HepG2 (cell line): ENCODE measurements at regions of chr15 and their contacts with region 1.

Region 1: DNA sequence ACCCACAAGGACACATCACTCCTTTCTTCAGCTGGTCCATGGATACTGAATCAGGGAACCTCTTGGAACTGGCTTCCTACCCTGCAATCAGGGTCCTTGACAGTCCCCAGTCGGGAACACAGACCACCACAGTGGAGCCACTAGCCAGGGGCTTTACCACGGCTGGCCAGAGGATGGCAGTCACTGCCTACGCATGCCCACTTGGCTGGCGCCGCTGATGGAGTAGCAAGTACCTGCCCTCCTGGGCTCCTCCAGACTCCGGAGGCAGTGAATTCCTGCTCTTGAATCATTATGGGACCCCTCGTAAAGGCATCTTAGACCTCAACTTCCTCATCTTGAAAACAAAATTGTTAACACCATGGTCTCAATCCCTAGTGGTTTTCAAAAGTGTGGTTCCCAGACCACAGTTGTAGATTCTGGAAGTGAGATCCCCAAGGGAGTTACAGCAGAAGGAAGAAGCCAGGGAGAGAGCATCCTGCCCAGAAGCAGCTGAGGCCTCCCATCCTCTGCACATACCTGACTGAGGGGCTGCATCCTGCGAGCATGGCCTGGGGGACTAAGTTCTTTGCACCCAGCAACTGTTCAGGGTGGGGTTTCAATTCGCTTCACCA is 9.1 kb upstream of the SKIC8 start:
- DNase-seq: peak; percentile 41
- ATAC-seq: peak; percentile 79
- H3K4me3 ChIP-seq: no peak overlapping the region
- H3K27ac ChIP-seq: no peak overlapping the region
- H3K4me1 ChIP-seq: peaks cover 31% of the 10 kb centered on the region
- H3K27me3 ChIP-seq: peaks cover 0 to 7% of the 10 kb centered on the region in 2 experiments; a peak in 3 of 5 replicates
- CTCF ChIP-seq: peak; percentile 94
- EP300 ChIP-seq: no peak
- POLR2A ChIP-seq: no peak
- RAD21 ChIP-seq: peak; percentile 88

Region 2: GRCh38 chr15:78353093-78353492 is 44.6 kb after region 1 on chr15:
- CTCF ChIA-PET with region 1: no interaction called
- POLR2A ChIA-PET with region 1: no interaction called
- in situ Hi-C with region 1: no loop called
- intact Hi-C with region 1: no loop called
- DNase-seq: peak; percentile 22
- ATAC-seq: no peak
- H3K4me3 ChIP-seq: no peak overlapping the region
- H3K27ac ChIP-seq: no peak overlapping the region
- H3K4me1 ChIP-seq: peaks cover under 1% of the 10 kb centered on the region; the same call in 1 of the 2 replicates
- H3K27me3 ChIP-seq: peaks cover 0 to 11% of the 10 kb centered on the region in 2 experiments; a peak in 2 of 5 replicates
- CTCF ChIP-seq: no peak
- EP300 ChIP-seq: no peak
- POLR2A ChIP-seq: no peak
- RAD21 ChIP-seq: no peak

Region 3: GRCh38 chr15:78364233-78364632 is 55.7 kb after region 1 on chr15:
- CTCF ChIA-PET with region 1: no interaction called
- POLR2A ChIA-PET with region 1: no interaction called
- in situ Hi-C with region 1: no loop called
- intact Hi-C with region 1: no loop called
- DNase-seq: no peak
- ATAC-seq: no peak
- H3K4me3 ChIP-seq: no peak overlapping the region
- H3K27ac ChIP-seq: no peak overlapping the region
- H3K4me1 ChIP-seq: no peaks in the 10 kb centered on the region
- H3K27me3 ChIP-seq: peaks cover 2 to 10% of the 10 kb centered on the region in 2 experiments; a peak in 4 of 5 replicates
- CTCF ChIP-seq: no peak
- EP300 ChIP-seq: no peak
- POLR2A ChIP-seq: no peak
- RAD21 ChIP-seq: no peak

Region 4: DNA sequence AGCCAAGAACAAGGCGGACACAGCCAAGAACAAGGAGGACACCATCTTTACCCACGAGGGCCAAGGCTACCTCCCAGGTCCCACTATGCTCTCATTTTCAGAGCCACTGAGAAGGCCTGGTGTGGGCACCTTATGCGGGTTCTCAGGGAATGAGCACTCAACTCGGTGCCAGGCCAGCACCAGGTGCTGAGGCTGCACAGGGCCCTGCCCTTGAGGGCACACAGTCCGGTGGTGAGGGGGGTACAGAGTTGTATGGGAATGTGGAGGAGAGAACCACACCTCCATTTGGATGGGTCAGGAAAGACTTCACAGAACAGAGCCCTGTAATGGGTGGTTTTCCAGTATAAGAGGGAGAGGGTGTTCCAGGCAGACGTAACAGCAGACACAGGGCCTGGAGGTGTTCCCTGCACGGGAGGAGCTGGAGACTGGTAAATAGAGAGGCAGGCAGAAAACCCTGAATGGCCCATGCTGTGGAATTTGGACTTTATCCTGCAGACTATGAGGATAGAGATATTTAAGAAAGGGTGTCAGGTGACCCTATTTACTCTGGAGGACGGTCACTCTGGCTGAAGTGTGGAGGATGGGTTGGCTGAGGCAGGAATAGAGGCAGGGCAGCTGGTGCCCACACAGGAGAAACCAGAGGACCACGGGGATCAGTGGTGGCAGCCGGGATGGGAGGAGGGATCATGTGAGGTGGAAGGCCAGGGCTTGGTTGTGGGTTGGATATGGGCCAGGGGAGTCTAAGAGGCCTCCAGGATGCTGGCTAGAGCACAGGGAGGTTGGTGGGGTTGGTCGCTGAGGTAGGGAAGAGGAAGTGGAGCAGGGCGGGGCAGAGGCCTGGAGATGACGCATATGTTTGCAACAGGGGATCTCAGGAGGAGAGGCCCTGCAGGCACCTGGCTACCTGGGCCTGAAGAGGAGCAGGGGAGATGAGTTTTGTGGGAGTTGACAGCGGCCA is 66.2 kb after region 1 on chr15:
- CTCF ChIA-PET with region 1: no interaction called
- POLR2A ChIA-PET with region 1: no interaction called
- in situ Hi-C with region 1: no loop called
- intact Hi-C with region 1: loop called (anchors 10 kb)
- DNase-seq: peak; percentile 90
- ATAC-seq: peak; percentile 93
- H3K4me3 ChIP-seq: peak overlapping the region; percentile 17 to 54 (median 40); a peak in 3 of 6 replicates
- H3K27ac ChIP-seq: peak overlapping the region; percentile 54
- H3K4me1 ChIP-seq: peaks cover 28% of the 10 kb centered on the region
- H3K27me3 ChIP-seq: no peaks in the 10 kb centered on the region; a peak in 1 of 5 replicates
- CTCF ChIP-seq: no peak
- EP300 ChIP-seq: peak; percentile 37 to 45; a peak in 2 of 4 replicates
- POLR2A ChIP-seq: no peak; a peak in 1 of 4 replicates
- RAD21 ChIP-seq: no peak

Region 5: DNA sequence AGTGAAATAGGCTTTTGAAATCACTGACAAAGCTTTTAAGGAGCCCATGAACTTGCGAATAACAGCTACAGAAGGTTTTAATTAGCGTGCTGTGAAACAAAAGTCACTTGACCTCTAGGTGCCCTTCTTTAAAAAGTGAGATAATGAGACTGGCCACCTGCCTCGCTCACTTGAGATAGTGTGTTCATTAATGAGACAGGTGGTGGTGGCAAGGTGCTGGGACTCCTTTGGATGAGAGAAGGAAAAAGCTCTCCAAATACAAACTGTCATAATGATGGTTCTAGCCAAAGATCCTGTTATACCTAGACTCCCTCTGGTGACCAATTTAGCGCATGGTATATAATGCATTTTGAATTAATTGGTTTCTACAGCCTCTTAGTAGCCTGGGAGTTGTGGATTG is 106.8 kb after region 1 on chr15:
- CTCF ChIA-PET with region 1: interaction called, 12 read pairs
- POLR2A ChIA-PET with region 1: interaction called, 6 read pairs
- in situ Hi-C with region 1: loop called (anchors 5 kb)
- intact Hi-C with region 1: loop called (anchors 2 kb)
- DNase-seq: no peak
- ATAC-seq: no peak; the same call in 2 of the 3 replicates
- H3K4me3 ChIP-seq: no peak overlapping the region
- H3K27ac ChIP-seq: no peak overlapping the region
- H3K4me1 ChIP-seq: peaks cover 29% of the 10 kb centered on the region
- H3K27me3 ChIP-seq: peaks cover 0 to 3% of the 10 kb centered on the region in 2 experiments; a peak in 1 of 5 replicates
- CTCF ChIP-seq: peak; percentile 26; the same call in 1 of the 2 replicates
- EP300 ChIP-seq: no peak
- POLR2A ChIP-seq: no peak
- RAD21 ChIP-seq: no peak

Region 6: GRCh38 chr15:78422571-78423340 is 114.2 kb after region 1 on chr15:
- CTCF ChIA-PET with region 1: interaction called, 47 read pairs
- POLR2A ChIA-PET with region 1: interaction called, 6 read pairs
- in situ Hi-C with region 1: loop called (anchors 5 kb)
- intact Hi-C with region 1: loop called (anchors 1 kb)
- DNase-seq: peak; percentile 70
- ATAC-seq: peak; percentile 68
- H3K4me3 ChIP-seq: peak overlapping the region in 1 of 3 experiments; percentile 7; a peak in 2 of 6 replicates
- H3K27ac ChIP-seq: no peak overlapping the region
- H3K4me1 ChIP-seq: peaks cover 49% of the 10 kb centered on the region
- H3K27me3 ChIP-seq: no peaks in the 10 kb centered on the region; a peak in 1 of 5 replicates
- CTCF ChIP-seq: peak; percentile 87
- EP300 ChIP-seq: no peak
- POLR2A ChIP-seq: no peak
- RAD21 ChIP-seq: peak; percentile 62

Region 7: GRCh38 chr15:78481917-78482316 is 173.4 kb after region 1 on chr15:
- CTCF ChIA-PET with region 1: interaction called, 16 read pairs
- POLR2A ChIA-PET with region 1: no interaction called
- in situ Hi-C with region 1: loop called (anchors 10 kb)
- intact Hi-C with region 1: loop called (anchors 1 kb)
- DNase-seq: no peak
- ATAC-seq: no peak
- H3K4me3 ChIP-seq: no peak overlapping the region
- H3K27ac ChIP-seq: no peak overlapping the region
- H3K4me1 ChIP-seq: no peaks in the 10 kb centered on the region
- H3K27me3 ChIP-seq: no peaks in the 10 kb centered on the region
- CTCF ChIP-seq: no peak
- EP300 ChIP-seq: no peak
- POLR2A ChIP-seq: no peak
- RAD21 ChIP-seq: no peak

Region 8: DNA sequence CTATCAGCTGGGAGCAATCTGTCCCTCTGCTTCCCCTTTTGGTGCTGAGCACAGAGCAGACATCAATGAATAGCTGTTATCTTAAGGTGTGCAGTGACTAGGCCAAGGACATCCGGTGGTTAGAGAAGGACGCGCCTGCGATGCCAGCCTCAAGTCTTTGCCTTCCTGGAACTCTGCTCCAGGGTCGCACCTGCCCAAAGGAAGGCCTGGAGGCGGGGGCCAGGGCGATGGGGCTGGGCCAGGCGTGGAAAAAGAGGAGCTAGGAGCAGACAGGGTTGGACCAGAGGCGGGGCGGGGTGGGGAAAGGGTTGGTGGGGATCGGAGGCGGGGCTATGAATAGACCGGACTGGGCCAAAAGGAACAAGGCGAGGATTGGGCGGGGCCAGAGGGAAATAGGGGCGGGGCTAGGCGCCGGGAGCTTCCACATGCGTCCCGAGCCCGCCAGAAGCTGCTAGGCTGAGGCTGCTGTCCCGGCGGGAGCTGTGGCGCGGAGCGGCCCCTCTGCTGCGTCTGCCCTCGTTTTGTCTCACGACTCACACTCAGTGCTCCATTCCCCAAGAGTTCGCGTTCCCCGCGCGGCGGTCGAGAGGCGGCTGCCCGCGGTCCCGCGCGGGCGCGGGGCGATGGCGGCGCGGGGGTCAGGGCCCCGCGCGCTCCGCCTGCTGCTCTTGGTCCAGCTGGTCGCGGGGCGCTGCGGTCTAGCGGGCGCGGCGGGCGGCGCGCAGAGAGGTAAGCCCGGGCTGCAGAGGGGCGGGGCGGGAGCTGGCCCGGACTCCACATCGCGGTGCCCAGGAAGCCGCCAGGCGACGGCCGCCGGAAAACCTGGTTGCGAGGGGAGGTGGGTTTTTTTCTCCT is 256.8 kb after region 1 on chr15 and contains the start of gene CHRNA5:
- CTCF ChIA-PET with region 1: no interaction called
- POLR2A ChIA-PET with region 1: interaction called, 3 read pairs
- in situ Hi-C with region 1: no loop called
- intact Hi-C with region 1: loop called (anchors 10 kb)
- DNase-seq: peak; percentile 75
- ATAC-seq: peak; percentile 91
- H3K4me3 ChIP-seq: peak within 1 kb of the TSS; percentile 61 to 80 (median 73)
- H3K27ac ChIP-seq: no peak within 1 kb of the TSS
- H3K4me1 ChIP-seq: peaks cover 18% of the 10 kb centered on the region
- H3K27me3 ChIP-seq: no peaks in the 10 kb centered on the region
- CTCF ChIP-seq: no peak
- EP300 ChIP-seq: no peak
- POLR2A ChIP-seq: peak; percentile 75 to 79
- RAD21 ChIP-seq: no peak
- total RNA-seq, gene CHRNA5: 5.1 and 10.5 TPM in 2 replicates

Region 9: DNA sequence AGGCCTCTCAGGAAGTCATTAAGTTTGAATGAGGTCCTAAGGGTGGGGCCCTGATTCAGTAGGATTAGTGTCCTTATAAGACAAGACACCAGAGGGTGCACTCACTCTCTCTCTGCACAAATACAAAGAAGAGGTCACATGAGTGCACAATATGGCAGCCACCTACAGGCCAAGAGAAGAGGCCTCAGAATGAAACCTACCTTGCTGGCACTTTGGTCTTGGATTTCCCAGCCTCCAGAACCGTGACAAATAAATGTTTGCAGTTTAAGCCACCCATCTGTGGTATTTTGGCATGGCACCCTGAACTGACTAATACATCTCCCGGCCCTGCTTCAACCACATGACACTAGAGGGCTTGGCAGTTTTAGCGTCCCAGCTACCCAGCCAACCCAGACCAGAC is 406.4 kb after region 1 on chr15:
- CTCF ChIA-PET with region 1: no interaction called
- POLR2A ChIA-PET with region 1: no interaction called
- in situ Hi-C with region 1: loop called (anchors 10 kb)
- intact Hi-C with region 1: no loop called
- DNase-seq: peak; percentile 38
- ATAC-seq: no peak
- H3K4me3 ChIP-seq: no peak overlapping the region
- H3K27ac ChIP-seq: no peak overlapping the region
- H3K4me1 ChIP-seq: peaks cover 6% of the 10 kb centered on the region
- H3K27me3 ChIP-seq: no peaks in the 10 kb centered on the region; a peak in 1 of 5 replicates
- CTCF ChIP-seq: peak; percentile 33
- EP300 ChIP-seq: no peak
- POLR2A ChIP-seq: no peak
- RAD21 ChIP-seq: no peak